ENCODE measurements at regions of chr16 and their contacts with region 1.

Region 1: GRCh38 chr16:23072084-23072599 is 77.1 kb downstream of the USP31 start:
- DNase-seq: peak; percentile 56 to 88
- ATAC-seq: peak; percentile 89 to 92
- H3K4me3 ChIP-seq: no peak overlapping the region
- H3K27ac ChIP-seq: peak overlapping the region; percentile 86 to 89
- H3K4me1 ChIP-seq: peaks cover 41% of the 10 kb centered on the region
- CTCF ChIP-seq: no peak
- EP300 ChIP-seq: peak; percentile 77 to 93; a peak in 4 of 5 replicates
- POLR2A ChIP-seq: no peak
- RAD21 ChIP-seq: 0 out of 5 replicates have a peak, but pooled peaks of 1 of the 2 experiments have one; percentile 15

Region 2: DNA sequence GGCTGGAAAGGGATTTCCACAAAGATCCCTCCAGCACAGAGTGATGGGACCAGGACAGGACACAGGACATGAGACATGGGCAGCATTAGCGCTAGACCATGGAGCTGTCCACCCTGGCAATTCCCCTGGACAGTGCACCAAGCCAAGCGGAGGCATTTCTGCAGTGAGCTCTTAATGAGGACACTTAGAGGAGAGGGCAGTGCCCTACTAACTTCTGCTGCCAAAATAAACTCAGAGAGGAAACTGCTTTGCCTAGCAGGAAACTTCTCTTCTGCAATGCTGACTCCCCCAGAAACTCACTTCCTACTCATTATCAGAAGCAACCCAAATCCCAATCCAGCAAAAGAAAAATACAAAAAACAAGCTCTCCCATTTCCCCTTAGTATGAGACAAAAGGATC is 139.0 kb before region 1 on chr16:
- CTCF ChIA-PET with region 1: no interaction called
- POLR2A ChIA-PET with region 1: no interaction called
- DNase-seq: no peak
- ATAC-seq: 0 out of 6 replicates have a peak, but pooled peaks of 1 of the 2 experiments have one; percentile 54
- H3K4me3 ChIP-seq: no peak overlapping the region
- H3K27ac ChIP-seq: no peak overlapping the region
- H3K4me1 ChIP-seq: no peaks in the 10 kb centered on the region
- CTCF ChIP-seq: no peak
- EP300 ChIP-seq: no peak
- POLR2A ChIP-seq: no peak
- RAD21 ChIP-seq: no peak

Region 3: GRCh38 chr16:23031508-23032098 is 40.5 kb before region 1 on chr16:
- CTCF ChIA-PET with region 1: no interaction called
- POLR2A ChIA-PET with region 1: no interaction called
- DNase-seq: no peak
- ATAC-seq: no peak
- H3K4me3 ChIP-seq: no peak overlapping the region
- H3K27ac ChIP-seq: no peak overlapping the region
- H3K4me1 ChIP-seq: no peaks in the 10 kb centered on the region
- CTCF ChIP-seq: no peak
- EP300 ChIP-seq: no peak
- POLR2A ChIP-seq: no peak
- RAD21 ChIP-seq: no peak

Region 4: DNA sequence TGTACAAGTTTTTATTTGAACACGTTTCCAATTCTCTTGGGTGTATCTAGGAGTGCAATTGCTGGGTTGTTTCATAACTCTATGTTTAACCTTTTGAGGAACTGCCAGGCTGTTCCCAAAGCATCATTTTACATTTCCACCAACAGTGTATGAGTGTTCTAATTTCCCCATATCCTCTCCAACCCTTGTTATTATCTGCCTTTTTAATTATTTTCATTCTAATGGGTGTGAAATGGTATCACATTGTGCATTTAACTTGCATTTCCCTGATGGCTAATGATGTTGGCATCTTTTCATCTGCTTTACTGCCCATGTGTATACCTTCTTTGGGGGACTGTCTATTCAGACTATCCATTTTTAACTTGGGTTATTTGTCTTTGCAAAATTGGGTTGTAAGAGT is 27.1 kb before region 1 on chr16:
- CTCF ChIA-PET with region 1: no interaction called
- POLR2A ChIA-PET with region 1: no interaction called
- DNase-seq: no peak
- ATAC-seq: no peak
- H3K4me3 ChIP-seq: no peak overlapping the region
- H3K27ac ChIP-seq: no peak overlapping the region
- H3K4me1 ChIP-seq: no peaks in the 10 kb centered on the region
- CTCF ChIP-seq: no peak
- EP300 ChIP-seq: no peak
- POLR2A ChIP-seq: no peak
- RAD21 ChIP-seq: no peak

Region 5: GRCh38 chr16:23060458-23061320 is 11.5 kb before region 1 on chr16:
- CTCF ChIA-PET with region 1: interaction called, 25 read pairs
- POLR2A ChIA-PET with region 1: no interaction called
- DNase-seq: peak; percentile 73 to 78
- ATAC-seq: peak; percentile 89 to 93
- H3K4me3 ChIP-seq: no peak overlapping the region
- H3K27ac ChIP-seq: no peak overlapping the region
- H3K4me1 ChIP-seq: peaks cover 7% of the 10 kb centered on the region; the same call in 2 of the 3 replicates
- CTCF ChIP-seq: peak; percentile 78
- EP300 ChIP-seq: no peak
- POLR2A ChIP-seq: no peak
- RAD21 ChIP-seq: peak; percentile 74 to 77

Region 6: GRCh38 chr16:23155439-23156049 is 83.4 kb after region 1 on chr16:
- CTCF ChIA-PET with region 1: no interaction called
- POLR2A ChIA-PET with region 1: no interaction called
- DNase-seq: peak in 1 of 2 experiments; percentile 41
- ATAC-seq: peak; percentile 83 to 93
- H3K4me3 ChIP-seq: no peak overlapping the region
- H3K27ac ChIP-seq: no peak overlapping the region
- H3K4me1 ChIP-seq: no peaks in the 10 kb centered on the region
- CTCF ChIP-seq: peak; percentile 47
- EP300 ChIP-seq: no peak
- POLR2A ChIP-seq: no peak
- RAD21 ChIP-seq: peak in 1 of 2 experiments; percentile 33; a peak in 2 of 5 replicates

Measured in A549 (cell line).